ENCODE measurements at regions of chr1 and their contacts with region 1.

Region 1: GRCh38 chr1:153352523-153352922 is 3.9 kb upstream of the PGLYRP4 start:
- DNase-seq: peak; percentile 89
- ATAC-seq: peak; percentile 68
- H3K4me3 ChIP-seq: no peak overlapping the region
- H3K27ac ChIP-seq: no peak overlapping the region
- H3K4me1 ChIP-seq: peaks cover 34% of the 10 kb centered on the region
- H3K27me3 ChIP-seq: peaks cover 41% of the 10 kb centered on the region
- CTCF ChIP-seq: peak; percentile 97

Region 2: GRCh38 chr1:153404768-153405167 is 52.2 kb after region 1 on chr1:
- CTCF ChIA-PET with region 1: no interaction called
- POLR2A ChIA-PET with region 1: no interaction called
- intact Hi-C with region 1: loop called (anchors 2 kb)
- DNase-seq: peak; percentile 64
- ATAC-seq: peak; percentile 31; the same call in 1 of the 2 replicates
- H3K4me3 ChIP-seq: no peak overlapping the region
- H3K27ac ChIP-seq: no peak overlapping the region
- H3K4me1 ChIP-seq: no peaks in the 10 kb centered on the region
- H3K27me3 ChIP-seq: peaks cover 75% of the 10 kb centered on the region
- CTCF ChIP-seq: peak; percentile 75

Region 3: DNA sequence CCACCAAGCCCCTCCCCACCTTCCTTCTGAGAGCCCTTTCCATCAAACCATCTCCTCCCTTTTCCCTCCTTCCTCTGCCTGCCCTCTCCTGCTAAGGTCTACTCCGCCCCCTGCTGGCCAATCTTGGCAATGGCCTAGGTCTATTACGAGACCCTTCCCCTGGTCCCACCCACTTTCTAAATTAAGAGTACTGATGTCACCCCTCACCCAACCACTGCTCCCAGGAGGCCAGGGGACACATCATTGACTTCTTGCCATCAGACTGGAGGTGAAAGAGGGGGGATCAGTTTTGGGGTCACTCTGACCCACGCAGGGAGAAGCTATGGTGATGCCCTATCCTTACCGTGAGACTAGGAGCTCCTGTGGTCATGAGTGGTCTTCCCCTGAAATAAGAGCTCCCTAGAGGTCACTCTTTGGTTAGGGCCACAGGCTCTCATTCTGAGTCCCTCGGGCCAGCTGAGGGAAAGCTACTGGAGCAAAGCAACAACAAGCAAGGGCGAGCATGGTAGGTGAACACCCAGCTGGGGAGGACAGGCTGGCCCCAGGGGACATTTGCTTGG is 142.5 kb after region 1 on chr1:
- CTCF ChIA-PET with region 1: interaction called, 13 read pairs
- POLR2A ChIA-PET with region 1: no interaction called
- intact Hi-C with region 1: loop called (anchors 1 kb)
- DNase-seq: peak; percentile 88
- ATAC-seq: peak; percentile 43
- H3K4me3 ChIP-seq: no peak overlapping the region
- H3K27ac ChIP-seq: no peak overlapping the region
- H3K4me1 ChIP-seq: peaks cover 18% of the 10 kb centered on the region
- H3K27me3 ChIP-seq: no peaks in the 10 kb centered on the region
- CTCF ChIP-seq: peak; percentile 98

Region 4: GRCh38 chr1:153670859-153671627 is 318.5 kb after region 1 on chr1 and contains the start of gene ILF2:
- CTCF ChIA-PET with region 1: no interaction called
- POLR2A ChIA-PET with region 1: no interaction called
- intact Hi-C with region 1: loop called (anchors 10 kb)
- DNase-seq: peak; percentile 100
- ATAC-seq: peak; percentile 87
- H3K4me3 ChIP-seq: peak within 1 kb of the TSS; percentile 89
- H3K27ac ChIP-seq: peak within 1 kb of the TSS; percentile 52
- H3K4me1 ChIP-seq: peaks cover 17% of the 10 kb centered on the region
- H3K27me3 ChIP-seq: no peaks in the 10 kb centered on the region
- CTCF ChIP-seq: peak; percentile 54
- total RNA-seq, gene ILF2: 398 and 439 TPM in 2 replicates

Region 5: GRCh38 chr1:153749408-153750005 is 397.0 kb after region 1 on chr1:
- CTCF ChIA-PET with region 1: no interaction called
- POLR2A ChIA-PET with region 1: no interaction called
- intact Hi-C with region 1: loop called (anchors 10 kb)
- DNase-seq: peak; percentile 92
- ATAC-seq: peak; percentile 100
- H3K4me3 ChIP-seq: no peak overlapping the region
- H3K27ac ChIP-seq: no peak overlapping the region
- H3K4me1 ChIP-seq: no peaks in the 10 kb centered on the region
- H3K27me3 ChIP-seq: no peaks in the 10 kb centered on the region
- CTCF ChIP-seq: peak; percentile 99

Measured in PC-3 (cell line).